ENCODE measurements at regions of chr3 and their contacts with region 1.

Region 1: GRCh38 chr3:178170698-178171535 is 365.3 kb upstream of the KCNMB2 start:
- DNase-seq: peak; percentile 96
- H3K4me3 ChIP-seq: no peak overlapping the region
- H3K27ac ChIP-seq: peak overlapping the region; percentile 85
- H3K4me1 ChIP-seq: peaks cover 27% of the 10 kb centered on the region
- H3K27me3 ChIP-seq: no peaks in the 10 kb centered on the region
- CTCF ChIP-seq: no peak
- POLR2A ChIP-seq: peak; percentile 91

Region 2: DNA sequence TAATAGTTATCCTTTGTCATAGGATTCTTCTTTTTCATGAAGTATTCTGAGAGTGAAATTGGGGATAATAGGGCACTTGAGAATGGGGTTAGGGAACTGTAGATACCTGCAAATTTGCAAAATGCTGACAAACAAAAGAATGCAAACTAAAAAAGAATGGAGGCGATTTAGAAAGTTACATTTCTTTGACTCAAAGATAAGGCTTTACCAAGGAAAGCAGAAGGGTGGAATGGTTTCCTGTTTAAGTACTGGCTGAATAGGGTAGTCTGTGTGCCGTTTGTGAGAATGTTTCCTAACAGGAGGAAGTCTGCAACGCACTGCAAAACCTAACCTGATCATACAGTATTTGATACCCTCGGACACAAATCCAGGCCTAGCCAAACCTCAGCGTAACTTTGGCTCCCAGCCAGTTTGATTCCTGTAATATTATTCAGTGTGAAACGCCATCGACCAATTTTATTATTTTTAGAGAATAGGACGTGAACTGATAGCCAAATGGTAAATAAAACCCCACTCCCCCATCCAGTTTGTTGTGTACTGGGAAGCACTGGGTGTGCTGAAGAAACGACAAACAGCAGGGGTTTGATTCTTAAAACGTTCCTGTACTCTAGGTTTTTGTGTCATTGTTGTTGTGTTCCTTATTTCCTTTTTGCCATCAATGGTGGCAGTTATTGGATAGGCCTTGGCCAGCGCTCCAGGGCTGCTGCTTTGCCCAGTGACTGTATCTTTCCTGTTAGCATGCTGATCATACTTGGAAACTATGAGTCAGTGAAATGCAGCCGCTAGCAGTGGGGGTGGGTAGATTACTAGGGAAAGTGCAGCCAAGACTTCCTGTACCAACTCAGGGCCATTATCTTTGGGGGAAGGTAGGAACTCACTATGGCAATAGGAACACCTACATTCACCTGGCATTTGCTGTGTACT is 825.6 kb before region 1 on chr3:
- CTCF ChIA-PET with region 1: no interaction called
- POLR2A ChIA-PET with region 1: no interaction called
- dilution Hi-C with region 1: no loop called
- intact Hi-C with region 1: loop called (anchors 1 kb)
- DNase-seq: peak; percentile 97
- H3K4me3 ChIP-seq: peak overlapping the region in 1 of 3 experiments; percentile 28
- H3K27ac ChIP-seq: peak overlapping the region; percentile 99
- H3K4me1 ChIP-seq: peaks cover 34% of the 10 kb centered on the region
- H3K27me3 ChIP-seq: no peaks in the 10 kb centered on the region
- CTCF ChIP-seq: no peak
- POLR2A ChIP-seq: peak; percentile 57

Region 3: GRCh38 chr3:177893321-177893720 is 277.6 kb before region 1 on chr3:
- CTCF ChIA-PET with region 1: no interaction called
- POLR2A ChIA-PET with region 1: no interaction called
- dilution Hi-C with region 1: no loop called
- intact Hi-C with region 1: loop called (anchors 1 kb)
- DNase-seq: peak; percentile 35
- H3K4me3 ChIP-seq: no peak overlapping the region
- H3K27ac ChIP-seq: peak overlapping the region; percentile 66
- H3K4me1 ChIP-seq: peaks cover 21% of the 10 kb centered on the region
- H3K27me3 ChIP-seq: no peaks in the 10 kb centered on the region
- CTCF ChIP-seq: peak; percentile 16 to 28
- POLR2A ChIP-seq: no peak

Region 4: DNA sequence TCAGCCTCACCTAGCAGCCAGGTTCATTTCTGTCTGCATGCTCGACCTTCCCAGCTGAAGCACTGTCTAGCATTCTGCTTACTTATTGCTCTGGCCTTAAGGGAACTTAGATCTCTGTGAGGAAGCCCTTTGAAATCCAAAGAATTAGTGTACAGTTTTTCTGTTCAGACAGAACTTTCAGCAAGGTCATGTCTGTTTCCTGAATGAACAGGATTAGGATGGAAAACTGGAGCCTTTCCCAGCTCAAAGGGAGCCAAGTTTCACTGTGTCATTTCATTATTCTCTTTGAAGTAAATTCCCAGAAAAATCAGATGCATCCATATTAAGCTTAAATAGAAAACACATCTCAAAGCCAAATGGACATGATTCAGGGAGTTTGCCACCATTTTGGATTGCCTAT is 92.0 kb before region 1 on chr3:
- CTCF ChIA-PET with region 1: interaction called, 3 read pairs
- POLR2A ChIA-PET with region 1: interaction called, 3 read pairs
- dilution Hi-C with region 1: no loop called
- intact Hi-C with region 1: loop called (anchors 2 kb)
- DNase-seq: peak; percentile 99
- H3K4me3 ChIP-seq: no peak overlapping the region
- H3K27ac ChIP-seq: peak overlapping the region; percentile 81
- H3K4me1 ChIP-seq: peaks cover 26% of the 10 kb centered on the region
- H3K27me3 ChIP-seq: no peaks in the 10 kb centered on the region
- CTCF ChIP-seq: no peak
- POLR2A ChIP-seq: no peak

Region 5: GRCh38 chr3:178203165-178203564 is 32.2 kb after region 1 on chr3:
- CTCF ChIA-PET with region 1: interaction called, 3 read pairs
- POLR2A ChIA-PET with region 1: no interaction called
- dilution Hi-C with region 1: no loop called
- intact Hi-C with region 1: loop called (anchors 2 kb)
- DNase-seq: no peak
- H3K4me3 ChIP-seq: no peak overlapping the region
- H3K27ac ChIP-seq: no peak overlapping the region
- H3K4me1 ChIP-seq: peaks cover 14% of the 10 kb centered on the region
- H3K27me3 ChIP-seq: no peaks in the 10 kb centered on the region
- CTCF ChIP-seq: no peak
- POLR2A ChIP-seq: no peak

Region 6: DNA sequence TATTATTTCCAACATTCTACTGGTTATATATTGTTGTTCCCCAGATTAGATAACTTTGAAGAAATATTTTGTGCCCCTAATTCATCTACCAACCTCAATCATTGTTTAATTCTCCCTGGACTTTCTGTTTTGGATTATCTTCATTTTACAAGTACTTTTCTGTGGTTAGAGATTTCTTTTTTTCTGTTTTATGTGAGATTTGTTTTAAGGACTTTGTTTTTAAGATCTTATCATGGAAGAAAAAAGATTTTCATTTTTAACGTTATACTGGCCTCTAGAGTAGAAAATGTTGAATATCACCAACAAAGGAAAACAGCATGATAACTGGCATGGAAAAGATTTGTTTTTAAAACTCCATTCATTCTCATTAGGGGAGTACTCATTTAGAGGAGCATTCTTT is 154.4 kb after region 1 on chr3:
- CTCF ChIA-PET with region 1: no interaction called
- POLR2A ChIA-PET with region 1: no interaction called
- dilution Hi-C with region 1: no loop called
- intact Hi-C with region 1: loop called (anchors 1 kb)
- DNase-seq: peak; percentile 76
- H3K4me3 ChIP-seq: no peak overlapping the region
- H3K27ac ChIP-seq: peak overlapping the region; percentile 2
- H3K4me1 ChIP-seq: peaks cover 13% of the 10 kb centered on the region
- H3K27me3 ChIP-seq: no peaks in the 10 kb centered on the region
- CTCF ChIP-seq: peak in 1 of 2 donors; percentile 15
- POLR2A ChIP-seq: no peak

Region 7: DNA sequence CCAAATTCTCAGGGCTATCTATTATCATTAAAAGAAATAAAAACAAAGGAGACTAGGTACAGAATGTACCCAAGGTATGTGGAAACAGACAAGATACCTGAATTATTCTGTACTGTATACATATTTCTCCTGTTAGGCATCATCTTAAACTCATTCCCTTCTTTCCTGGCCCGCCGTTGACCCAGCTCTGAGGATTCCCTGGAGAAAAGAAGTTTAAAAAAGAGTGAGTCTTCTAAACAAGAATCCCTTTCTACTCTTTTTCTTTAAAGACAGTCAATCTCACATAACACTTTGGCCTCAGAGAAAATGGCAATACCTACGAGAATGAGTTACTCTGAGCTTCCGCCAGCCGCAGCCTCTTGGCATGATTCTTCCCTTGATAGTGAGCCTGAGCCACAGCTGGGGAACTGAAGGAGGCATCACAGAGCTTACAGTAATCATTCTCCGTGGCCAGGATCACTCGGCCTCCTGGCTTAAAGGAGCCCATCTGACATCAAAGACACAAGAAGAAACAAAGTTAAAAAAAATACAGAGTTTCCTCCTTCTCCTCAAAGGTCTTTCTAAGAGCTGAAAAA is 856.5 kb after region 1 on chr3:
- CTCF ChIA-PET with region 1: no interaction called
- POLR2A ChIA-PET with region 1: no interaction called
- dilution Hi-C with region 1: no loop called
- intact Hi-C with region 1: no loop called
- DNase-seq: no peak
- H3K4me3 ChIP-seq: no peak overlapping the region
- H3K27ac ChIP-seq: no peak overlapping the region
- H3K4me1 ChIP-seq: no peaks in the 10 kb centered on the region
- H3K27me3 ChIP-seq: no peaks in the 10 kb centered on the region
- CTCF ChIP-seq: no peak
- POLR2A ChIP-seq: no peak